Esophagus muscularis mucosa (tissue), 4 donors: ENCODE measurements at regions of chr2 and their contacts with region 1.

Region 1: DNA sequence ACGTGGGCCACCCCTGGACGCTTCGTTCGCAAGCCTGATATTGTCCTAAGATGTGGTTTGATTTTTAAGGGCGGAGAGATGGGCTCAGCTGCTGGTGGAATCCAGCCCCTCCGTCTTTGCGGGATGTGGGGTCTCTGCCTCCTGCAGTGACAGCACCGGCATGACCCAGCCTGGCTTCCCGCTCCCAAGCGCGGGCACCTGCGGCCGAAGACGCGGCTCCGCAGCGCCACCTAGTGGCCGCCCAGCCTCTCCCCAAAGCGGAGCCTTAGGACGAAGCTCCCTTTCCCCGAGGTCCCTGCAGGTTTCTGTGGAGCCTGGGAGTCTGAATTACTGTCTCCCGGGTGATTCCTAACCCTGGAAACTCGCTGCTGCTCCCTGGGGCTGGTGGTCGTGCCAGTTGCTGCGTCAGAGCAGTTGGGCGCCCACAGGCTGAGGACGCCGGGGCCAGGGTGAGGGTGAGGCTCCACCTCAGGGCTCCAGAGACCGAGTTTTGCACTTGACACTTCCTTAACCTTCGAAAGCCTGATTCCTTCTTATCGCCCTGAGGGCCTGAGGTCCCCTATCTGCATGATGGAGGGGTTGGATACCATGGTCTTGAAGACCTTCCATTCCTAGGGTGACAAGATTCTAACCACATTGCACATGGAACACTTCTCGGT is 137.5 kb downstream of the TPO start:
- DNase-seq: no peak
- H3K4me3 ChIP-seq: peak overlapping the region in 1 of 4 donors; percentile 2
- H3K27ac ChIP-seq: no peak overlapping the region
- H3K4me1 ChIP-seq: peaks cover 7 to 30% (median 24%) of the 10 kb centered on the region in 4 donors
- H3K27me3 ChIP-seq: peaks cover 0 to 20% (median 4%) of the 10 kb centered on the region in 4 donors
- CTCF ChIP-seq: peak; percentile 75 to 99 (median 90)
- EP300 ChIP-seq: no peak
- POLR2A ChIP-seq: no peak

Region 2: GRCh38 chr2:715854-716560 is 834.8 kb before region 1 on chr2:
- intact Hi-C with region 1: loop called (anchors 5 kb)
- DNase-seq: no peak
- H3K4me3 ChIP-seq: no peak overlapping the region
- H3K27ac ChIP-seq: no peak overlapping the region
- H3K4me1 ChIP-seq: peaks cover 0 to 6% (median 0%) of the 10 kb centered on the region in 4 donors
- H3K27me3 ChIP-seq: peaks cover 0 to 27% (median 0%) of the 10 kb centered on the region in 4 donors
- CTCF ChIP-seq: peak in 2 of 3 experiments; percentile 13 to 29
- EP300 ChIP-seq: no peak
- POLR2A ChIP-seq: no peak

Region 3: DNA sequence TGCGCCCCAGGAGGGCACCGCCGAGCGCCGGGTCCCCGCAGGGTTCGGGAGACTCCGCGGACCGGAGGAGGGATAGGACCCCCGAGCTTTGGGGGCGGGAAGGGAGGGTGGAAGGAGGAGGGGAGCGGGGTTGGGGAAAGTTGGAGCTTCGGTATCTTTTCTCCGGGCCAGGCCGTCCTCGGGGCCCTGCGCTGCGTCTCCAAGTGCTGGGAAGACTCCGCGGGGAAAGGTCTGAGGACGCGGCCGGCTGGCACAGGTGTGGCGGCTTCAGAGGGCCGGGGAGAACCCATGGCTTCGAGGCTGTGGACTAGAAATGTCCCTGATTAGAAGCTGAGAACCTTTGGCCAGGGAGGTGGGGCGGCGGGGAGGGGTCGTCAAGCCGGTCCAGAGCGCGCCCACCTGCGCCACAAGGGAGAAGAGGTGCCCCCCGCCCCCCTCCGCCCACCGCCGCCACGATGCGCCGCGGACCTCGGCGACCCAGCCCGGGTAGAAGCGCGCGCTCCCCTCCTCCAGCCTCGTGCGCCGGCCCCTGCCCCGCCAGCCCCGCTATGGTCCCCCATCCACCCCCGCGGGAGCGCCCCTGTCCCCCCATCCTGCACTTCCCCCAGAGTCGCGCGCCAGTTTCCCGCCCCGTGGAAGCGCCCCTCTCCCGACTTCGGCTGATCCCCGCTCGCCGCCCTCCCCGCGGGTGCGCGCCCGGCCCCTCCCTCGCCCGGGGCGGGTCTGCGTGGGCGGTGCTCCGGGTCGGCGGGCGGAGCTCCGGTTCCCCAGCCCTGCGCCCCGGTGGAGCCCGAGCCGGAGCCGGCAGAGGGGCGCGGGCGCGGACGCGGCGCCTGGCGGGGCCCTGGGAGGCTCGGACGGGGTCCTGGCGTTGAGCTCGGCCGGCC is 600.5 kb before region 1 on chr2 and contains the start of gene SNTG2:
- intact Hi-C with region 1: loop called (anchors 10 kb)
- DNase-seq: peak; percentile 53
- H3K4me3 ChIP-seq: peak within 1 kb of the TSS; percentile 52 to 67 (median 60)
- H3K27ac ChIP-seq: peak within 1 kb of the TSS in 3 of 4 donors; percentile 38 to 65 (median 51)
- H3K4me1 ChIP-seq: peaks cover 15 to 22% (median 20%) of the 10 kb centered on the region in 4 donors
- H3K27me3 ChIP-seq: peaks cover 0 to 78% (median 12%) of the 10 kb centered on the region in 4 donors
- CTCF ChIP-seq: no peak
- EP300 ChIP-seq: no peak
- POLR2A ChIP-seq: no peak
- total RNA-seq, gene SNTG2: 3.3 to 7.4 (median 4.5) TPM

Region 4: GRCh38 chr2:1421726-1422125 is 129.1 kb before region 1 on chr2:
- intact Hi-C with region 1: no loop called
- DNase-seq: no peak
- H3K4me3 ChIP-seq: no peak overlapping the region
- H3K27ac ChIP-seq: no peak overlapping the region
- H3K4me1 ChIP-seq: no peaks in the 10 kb centered on the region
- H3K27me3 ChIP-seq: peaks cover 0 to 17% (median 0%) of the 10 kb centered on the region in 4 donors
- CTCF ChIP-seq: no peak
- EP300 ChIP-seq: no peak
- POLR2A ChIP-seq: no peak

Region 5: GRCh38 chr2:1605102-1606045 is 54.6 kb after region 1 on chr2:
- intact Hi-C with region 1: no loop called
- DNase-seq: no peak
- H3K4me3 ChIP-seq: peak overlapping the region in 2 of 4 donors; percentile 20 to 24
- H3K27ac ChIP-seq: peak overlapping the region in 1 of 4 donors; percentile 21
- H3K4me1 ChIP-seq: peaks cover 12 to 16% (median 14%) of the 10 kb centered on the region in 4 donors
- H3K27me3 ChIP-seq: peaks cover 0 to 12% (median 0%) of the 10 kb centered on the region in 4 donors
- CTCF ChIP-seq: no peak
- EP300 ChIP-seq: peak; percentile 22
- POLR2A ChIP-seq: no peak

Region 6: DNA sequence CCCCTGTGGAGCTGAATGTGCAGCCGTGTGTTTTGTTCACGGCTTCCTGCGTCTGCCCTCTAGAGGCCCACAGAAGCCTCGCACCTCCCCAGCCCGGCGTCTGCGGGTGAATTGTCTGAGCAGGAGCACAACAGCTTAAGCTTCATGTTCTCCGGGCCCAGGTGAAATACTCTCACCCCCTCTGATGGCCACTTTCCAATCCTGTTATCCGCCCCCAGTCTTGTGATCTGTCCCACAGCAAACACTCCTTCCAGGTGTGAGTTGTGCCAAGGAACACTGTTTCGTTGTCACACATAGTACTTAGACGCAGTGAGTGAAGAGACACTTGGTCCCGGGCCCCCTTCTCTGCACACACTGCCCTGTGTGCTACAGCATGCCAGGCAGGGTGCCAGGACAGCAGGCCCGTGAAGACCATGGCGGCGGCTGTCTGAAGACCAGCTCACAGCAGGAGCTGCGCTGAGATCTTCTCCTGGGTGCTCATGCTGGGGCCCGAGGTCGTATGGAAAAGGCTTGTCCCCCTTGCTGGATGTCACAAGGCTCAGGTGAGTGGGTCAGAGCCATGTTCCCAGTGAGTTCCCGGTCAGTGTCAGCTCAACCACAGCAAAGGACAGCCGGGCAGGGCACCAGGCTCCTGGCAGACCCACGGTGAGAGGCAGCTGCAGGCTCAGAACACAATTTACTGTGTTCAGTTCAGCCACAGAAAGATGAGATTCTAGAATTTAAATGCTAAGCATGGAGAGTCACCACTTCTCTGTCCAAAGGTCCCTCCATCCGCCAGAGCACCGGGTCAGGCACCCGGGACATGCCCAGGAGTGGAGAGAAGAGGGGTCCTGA is 200.4 kb after region 1 on chr2:
- intact Hi-C with region 1: loop called (anchors 5 kb)
- DNase-seq: no peak
- H3K4me3 ChIP-seq: no peak overlapping the region
- H3K27ac ChIP-seq: peak overlapping the region in 2 of 4 donors; percentile 36 to 51
- H3K4me1 ChIP-seq: peaks cover 3 to 19% (median 17%) of the 10 kb centered on the region in 4 donors
- H3K27me3 ChIP-seq: peaks cover 0 to 16% (median 0%) of the 10 kb centered on the region in 4 donors
- CTCF ChIP-seq: peak; percentile 80 to 92 (median 81)
- EP300 ChIP-seq: no peak
- POLR2A ChIP-seq: no peak

Region 7: GRCh38 chr2:1769703-1770422 is 219.1 kb after region 1 on chr2:
- intact Hi-C with region 1: loop called (anchors 5 kb)
- DNase-seq: no peak
- H3K4me3 ChIP-seq: no peak overlapping the region
- H3K27ac ChIP-seq: no peak overlapping the region
- H3K4me1 ChIP-seq: peaks cover 0 to 6% (median 0%) of the 10 kb centered on the region in 4 donors
- H3K27me3 ChIP-seq: no peaks in the 10 kb centered on the region
- CTCF ChIP-seq: peak; percentile 65 to 78 (median 75)
- EP300 ChIP-seq: no peak
- POLR2A ChIP-seq: no peak